Activated CD4-positive, alpha-beta memory T cell treated with anti-CD3 and anti-CD28 coated beads for 36 hours (primary cell): ENCODE measurements at regions of chr1 and their contacts with region 1.

Region 1: GRCh38 chr1:92577261-92577895 is 90.7 kb upstream of the GFI1 start:
- DNase-seq: peak; percentile 31
- H3K4me3 Mint-ChIP-seq: peak overlapping the region; percentile 93
- H3K27ac Mint-ChIP-seq: peak overlapping the region; percentile 96
- H3K4me1 Mint-ChIP-seq: peaks cover 54% of the 10 kb centered on the region
- H3K27me3 Mint-ChIP-seq: no peaks in the 10 kb centered on the region

Region 2: GRCh38 chr1:92404661-92405060 is 172.7 kb before region 1 on chr1:
- CTCF ChIA-PET with region 1: no interaction called
- POLR2A ChIA-PET with region 1: no interaction called
- intact Hi-C with region 1: no loop called
- DNase-seq: no peak
- H3K4me3 Mint-ChIP-seq: no peak overlapping the region
- H3K27ac Mint-ChIP-seq: no peak overlapping the region
- H3K4me1 Mint-ChIP-seq: peaks cover 7% of the 10 kb centered on the region
- H3K27me3 Mint-ChIP-seq: no peaks in the 10 kb centered on the region

Region 3: GRCh38 chr1:92556350-92556749 is 21.0 kb before region 1 on chr1:
- CTCF ChIA-PET with region 1: no interaction called
- POLR2A ChIA-PET with region 1: no interaction called
- intact Hi-C with region 1: loop called (anchors 2 kb)
- DNase-seq: no peak
- H3K4me3 Mint-ChIP-seq: no peak overlapping the region
- H3K27ac Mint-ChIP-seq: peak overlapping the region; percentile 13
- H3K4me1 Mint-ChIP-seq: peaks cover 42% of the 10 kb centered on the region
- H3K27me3 Mint-ChIP-seq: no peaks in the 10 kb centered on the region

Region 4: GRCh38 chr1:92567211-92567868 is 10.0 kb before region 1 on chr1:
- CTCF ChIA-PET with region 1: interaction called, 4 read pairs
- POLR2A ChIA-PET with region 1: interaction called, 8 read pairs
- intact Hi-C with region 1: loop called (anchors 1 kb)
- DNase-seq: no peak
- H3K4me3 Mint-ChIP-seq: no peak overlapping the region
- H3K27ac Mint-ChIP-seq: no peak overlapping the region
- H3K4me1 Mint-ChIP-seq: peaks cover 49% of the 10 kb centered on the region
- H3K27me3 Mint-ChIP-seq: no peaks in the 10 kb centered on the region